ENCODE measurements at regions of chr10 and their contacts with region 1.

Region 1: DNA sequence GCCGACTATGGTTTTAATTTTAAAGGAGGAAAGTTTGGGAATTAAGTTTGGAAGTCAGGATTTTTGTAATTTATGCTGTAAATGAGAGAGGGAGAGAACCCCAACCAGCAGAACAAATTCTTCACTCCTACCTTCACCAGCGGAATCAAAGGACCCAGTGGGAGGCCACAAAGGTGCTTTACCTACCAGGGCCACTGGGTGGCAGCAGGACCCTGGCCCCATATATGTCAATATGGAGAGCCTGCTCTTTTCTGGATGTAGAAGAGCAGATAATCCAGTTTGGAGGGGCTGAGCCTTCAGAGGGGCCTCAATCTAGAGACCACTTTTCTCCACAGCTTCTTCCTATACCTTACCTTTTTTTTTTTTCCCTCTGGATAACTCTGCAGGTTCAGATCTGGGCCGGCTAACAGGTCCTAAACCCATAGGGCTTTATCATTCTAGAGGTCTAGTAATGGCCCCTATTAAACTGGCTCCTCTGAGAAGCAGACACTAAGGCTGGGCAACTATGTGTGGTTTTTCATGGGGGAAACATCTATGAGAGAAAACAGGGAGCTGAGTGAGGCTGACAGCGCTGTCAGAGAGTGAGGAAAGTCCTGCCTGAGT is 8.5 kb upstream of the SCD start:
- DNase-seq: peak; percentile 64 to 85
- ATAC-seq: peak; percentile 64 to 79; a peak in 5 of 6 replicates
- H3K4me3 ChIP-seq: no peak overlapping the region
- H3K27ac ChIP-seq: peak overlapping the region; percentile 1 to 82; a peak in 3 of 6 replicates
- H3K4me1 ChIP-seq: peaks cover 34% of the 10 kb centered on the region
- CTCF ChIP-seq: peak; percentile 93
- EP300 ChIP-seq: no peak
- POLR2A ChIP-seq: no peak
- RAD21 ChIP-seq: peak; percentile 97 to 98

Region 2: DNA sequence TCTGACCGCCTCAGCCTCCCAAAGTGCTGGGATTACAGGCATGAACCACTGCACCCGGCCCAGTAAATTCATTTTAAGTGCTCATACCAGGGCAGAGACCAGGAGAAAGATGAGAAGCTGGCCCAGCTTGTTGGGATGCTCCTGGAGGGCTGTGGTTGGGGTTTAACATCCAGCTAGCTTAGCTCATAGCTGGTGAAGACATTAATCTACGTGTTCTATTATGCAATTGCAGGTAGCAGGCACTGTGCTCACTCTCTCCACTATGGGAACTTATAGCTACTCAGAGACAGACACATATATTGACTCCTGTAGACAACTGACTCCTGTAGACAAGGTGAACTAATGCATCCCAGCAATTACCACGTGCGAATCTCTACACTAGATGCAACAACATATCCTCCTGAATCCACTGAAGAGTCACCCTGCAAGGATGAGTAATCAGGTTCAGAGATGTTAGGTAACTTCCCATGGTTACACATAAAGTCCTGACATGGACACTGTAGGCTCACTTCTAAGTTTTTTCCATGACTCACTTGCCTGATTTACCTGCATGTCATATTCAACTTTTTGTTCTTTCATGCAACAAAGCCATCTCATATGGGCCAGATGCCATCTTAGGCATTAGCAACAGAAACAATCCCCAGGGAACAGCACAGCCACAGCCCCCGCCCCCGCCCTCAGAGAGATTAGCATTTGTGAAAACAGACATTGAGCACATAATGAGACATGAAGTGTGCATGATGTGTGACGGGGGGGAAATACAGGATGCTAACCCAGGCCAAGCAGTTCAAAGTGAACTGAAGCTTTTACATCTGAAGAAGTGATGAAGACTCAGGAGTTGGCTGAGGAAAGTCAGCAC is 190.0 kb before region 1 on chr10:
- CTCF ChIA-PET with region 1: no interaction called
- POLR2A ChIA-PET with region 1: no interaction called
- DNase-seq: peak; percentile 11 to 37
- ATAC-seq: peak; percentile 73 to 86
- H3K4me3 ChIP-seq: no peak overlapping the region
- H3K27ac ChIP-seq: no peak overlapping the region
- H3K4me1 ChIP-seq: 0 out of 3 replicates have a peak, but pooled peaks cover 4% of the 10 kb centered on the region
- CTCF ChIP-seq: no peak
- EP300 ChIP-seq: no peak
- POLR2A ChIP-seq: no peak
- RAD21 ChIP-seq: no peak

Region 3: GRCh38 chr10:100303724-100304319 is 34.7 kb before region 1 on chr10:
- CTCF ChIA-PET with region 1: interaction called, 12 read pairs
- POLR2A ChIA-PET with region 1: no interaction called
- DNase-seq: peak; percentile 55 to 69
- ATAC-seq: peak; percentile 63 to 85; a peak in 3 of 6 replicates
- H3K4me3 ChIP-seq: no peak overlapping the region
- H3K27ac ChIP-seq: no peak overlapping the region
- H3K4me1 ChIP-seq: peaks cover 32% of the 10 kb centered on the region
- CTCF ChIP-seq: peak; percentile 80
- EP300 ChIP-seq: no peak
- POLR2A ChIP-seq: no peak
- RAD21 ChIP-seq: peak; percentile 79

Region 4: GRCh38 chr10:100311307-100311706 is 27.2 kb before region 1 on chr10:
- CTCF ChIA-PET with region 1: interaction called, 32 read pairs
- POLR2A ChIA-PET with region 1: no interaction called
- DNase-seq: peak in 1 of 2 experiments; percentile 20
- ATAC-seq: peak; percentile 38 to 60; a peak in 4 of 6 replicates
- H3K4me3 ChIP-seq: no peak overlapping the region
- H3K27ac ChIP-seq: peak overlapping the region in 1 of 2 experiments; percentile 44; a peak in 3 of 6 replicates
- H3K4me1 ChIP-seq: peaks cover 26% of the 10 kb centered on the region
- CTCF ChIP-seq: no peak
- EP300 ChIP-seq: no peak
- POLR2A ChIP-seq: no peak
- RAD21 ChIP-seq: no peak

Region 5: GRCh38 chr10:100327007-100327717 is 11.4 kb before region 1 on chr10:
- CTCF ChIA-PET with region 1: interaction called, 22 read pairs
- POLR2A ChIA-PET with region 1: no interaction called
- DNase-seq: no peak
- ATAC-seq: no peak
- H3K4me3 ChIP-seq: no peak overlapping the region
- H3K27ac ChIP-seq: no peak overlapping the region
- H3K4me1 ChIP-seq: no peaks in the 10 kb centered on the region
- CTCF ChIP-seq: no peak
- EP300 ChIP-seq: no peak
- POLR2A ChIP-seq: no peak
- RAD21 ChIP-seq: no peak

Region 6: GRCh38 chr10:100373298-100374136 is 35.0 kb after region 1 on chr10:
- CTCF ChIA-PET with region 1: interaction called, 15 read pairs
- POLR2A ChIA-PET with region 1: interaction called, 17 read pairs
- DNase-seq: peak; percentile 99 to 100
- ATAC-seq: peak; percentile 88 to 92
- H3K4me3 ChIP-seq: peak overlapping the region; percentile 43
- H3K27ac ChIP-seq: peak overlapping the region; percentile 97 to 98
- H3K4me1 ChIP-seq: peaks cover 61% of the 10 kb centered on the region
- CTCF ChIP-seq: no peak
- EP300 ChIP-seq: peak in 1 of 2 experiments; percentile 30; a peak in 1 of 5 replicates
- POLR2A ChIP-seq: peak; percentile 45
- RAD21 ChIP-seq: peak in 1 of 2 experiments; percentile 53; a peak in 2 of 5 replicates

Region 7: DNA sequence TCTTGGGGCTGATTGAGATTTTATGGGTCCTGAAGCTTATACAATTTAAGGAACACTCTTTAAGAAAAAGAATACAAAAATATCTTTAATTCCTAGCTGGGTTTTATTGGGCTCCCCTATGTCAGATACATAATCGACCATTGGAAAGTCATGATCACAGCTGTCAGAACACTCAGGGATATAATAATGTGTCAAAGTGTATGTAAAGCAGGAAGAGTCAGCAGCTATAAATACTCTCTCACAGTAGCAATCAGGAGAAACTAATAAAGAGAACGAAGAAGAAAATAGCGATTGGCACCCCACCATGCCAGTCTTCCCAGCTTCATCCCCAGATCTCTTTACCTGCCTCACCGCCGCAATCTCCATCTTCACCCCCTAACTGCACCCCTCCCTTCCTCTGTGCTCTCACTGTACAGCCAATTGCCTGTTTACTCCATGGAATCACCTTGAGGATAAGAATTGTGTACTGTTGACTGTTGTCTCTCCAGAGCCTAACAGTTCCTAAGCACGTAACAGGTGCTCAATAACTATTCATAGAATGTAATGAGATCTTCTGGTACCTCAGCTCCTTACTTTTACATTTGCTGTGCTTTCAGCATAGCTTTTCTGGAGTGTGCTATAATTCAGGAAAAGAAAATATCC is 100.3 kb after region 1 on chr10:
- CTCF ChIA-PET with region 1: interaction called, 534 read pairs
- POLR2A ChIA-PET with region 1: no interaction called
- DNase-seq: no peak
- ATAC-seq: no peak
- H3K4me3 ChIP-seq: no peak overlapping the region
- H3K27ac ChIP-seq: no peak overlapping the region
- H3K4me1 ChIP-seq: no peaks in the 10 kb centered on the region
- CTCF ChIP-seq: no peak
- EP300 ChIP-seq: no peak
- POLR2A ChIP-seq: no peak
- RAD21 ChIP-seq: no peak